CD8-positive, alpha-beta T cell (primary cell): ENCODE measurements at regions of chr15 and their contacts with region 1.

Region 1: GRCh38 chr15:64809649-64810496 is 15.6 kb downstream of the PIF1 start:
- DNase-seq: peak; percentile 27 to 78 (median 67)
- ATAC-seq: peak; percentile 71
- H3K4me3 ChIP-seq: no peak overlapping the region
- H3K4me3 Mint-ChIP-seq: no peak overlapping the region
- H3K27ac ChIP-seq: no peak overlapping the region
- H3K27ac Mint-ChIP-seq: no peak overlapping the region
- H3K4me1 ChIP-seq: no peaks in the 10 kb centered on the region
- H3K4me1 Mint-ChIP-seq: peaks cover 2% of the 10 kb centered on the region
- H3K27me3 ChIP-seq: no peaks in the 10 kb centered on the region
- H3K27me3 Mint-ChIP-seq: peaks cover 2% of the 10 kb centered on the region
- CTCF ChIP-seq: peak; percentile 88

Region 2: GRCh38 chr15:64681424-64682024 is 128.3 kb before region 1 on chr15:
- CTCF ChIA-PET with region 1: interaction called, 9 read pairs
- POLR2A ChIA-PET with region 1: no interaction called
- intact Hi-C with region 1: loop called in 1 of 2 experiments (anchors 1 kb)
- DNase-seq: peak in 2 of 9 experiments; percentile 26 to 38
- ATAC-seq: no peak
- H3K4me3 ChIP-seq: no peak overlapping the region
- H3K4me3 Mint-ChIP-seq: no peak overlapping the region
- H3K27ac ChIP-seq: no peak overlapping the region
- H3K27ac Mint-ChIP-seq: peak overlapping the region; percentile 62
- H3K4me1 ChIP-seq: no peaks in the 10 kb centered on the region
- H3K4me1 Mint-ChIP-seq: peaks cover 3% of the 10 kb centered on the region
- H3K27me3 ChIP-seq: no peaks in the 10 kb centered on the region
- H3K27me3 Mint-ChIP-seq: no peaks in the 10 kb centered on the region
- CTCF ChIP-seq: no peak

Region 3: GRCh38 chr15:64780600-64781156 is 29.2 kb before region 1 on chr15:
- CTCF ChIA-PET with region 1: interaction called, 36 read pairs
- POLR2A ChIA-PET with region 1: no interaction called
- intact Hi-C with region 1: no loop called
- DNase-seq: no peak
- ATAC-seq: no peak
- H3K4me3 ChIP-seq: no peak overlapping the region
- H3K4me3 Mint-ChIP-seq: no peak overlapping the region
- H3K27ac ChIP-seq: no peak overlapping the region
- H3K27ac Mint-ChIP-seq: no peak overlapping the region
- H3K4me1 ChIP-seq: peaks cover 4% of the 10 kb centered on the region
- H3K4me1 Mint-ChIP-seq: peaks cover 14% of the 10 kb centered on the region
- H3K27me3 ChIP-seq: peaks cover 4 to 5% of the 10 kb centered on the region in 2 experiments
- H3K27me3 Mint-ChIP-seq: peaks cover 13% of the 10 kb centered on the region
- CTCF ChIP-seq: no peak

Region 4: DNA sequence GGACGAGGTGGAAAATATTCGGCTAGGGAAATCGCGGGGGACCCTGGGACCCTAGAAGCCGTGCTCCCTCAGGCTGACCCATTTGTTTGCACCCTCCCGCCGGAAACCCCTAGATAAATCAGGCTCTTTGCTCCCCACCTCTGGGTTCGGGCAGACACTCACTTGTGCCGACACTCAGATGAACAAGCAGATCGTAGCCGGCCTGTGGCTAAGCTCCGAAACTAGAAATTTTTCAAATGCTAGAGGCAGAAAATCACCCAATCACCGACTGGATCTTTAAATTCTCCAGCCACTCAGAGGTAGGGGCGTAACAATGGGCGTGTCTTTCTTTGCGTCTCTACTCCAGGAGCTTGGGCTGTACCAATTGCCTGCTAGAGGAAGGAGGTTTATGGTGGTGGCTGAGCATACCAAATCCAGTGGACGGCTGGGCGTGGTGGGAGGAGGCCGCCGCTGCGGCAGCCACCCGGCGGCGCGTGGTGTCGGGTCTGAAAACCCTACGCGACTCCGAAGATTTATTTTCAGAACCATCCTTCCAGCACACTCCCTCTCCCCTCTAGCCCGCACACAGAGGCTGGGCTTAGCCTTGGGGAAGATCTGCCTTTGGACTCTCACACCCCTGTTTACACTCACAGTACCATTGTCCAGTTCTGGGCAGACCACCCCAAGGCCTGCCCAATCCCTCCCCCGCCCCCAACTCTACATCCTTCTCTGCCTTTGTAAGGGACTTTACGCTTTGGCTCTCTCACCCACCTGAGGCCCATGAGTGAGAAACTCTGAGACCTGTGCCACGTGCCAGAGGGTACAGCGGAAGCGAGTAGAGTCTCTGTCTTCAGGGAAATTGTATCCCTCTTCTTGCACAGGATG is 15.8 kb after region 1 on chr15 and contains the start of gene PIF1:
- CTCF ChIA-PET with region 1: interaction called, 59 read pairs
- POLR2A ChIA-PET with region 1: no interaction called
- intact Hi-C with region 1: no loop called
- DNase-seq: peak; percentile 67 to 97 (median 84)
- ATAC-seq: peak; percentile 97
- H3K4me3 ChIP-seq: peak within 1 kb of the TSS; percentile 41 to 47
- H3K4me3 Mint-ChIP-seq: peak within 1 kb of the TSS; percentile 88
- H3K27ac ChIP-seq: peak within 1 kb of the TSS in 1 of 2 experiments; percentile 64
- H3K27ac Mint-ChIP-seq: peak within 1 kb of the TSS; percentile 70
- H3K4me1 ChIP-seq: peaks cover 23% of the 10 kb centered on the region
- H3K4me1 Mint-ChIP-seq: peaks cover 32% of the 10 kb centered on the region
- H3K27me3 ChIP-seq: no peaks in the 10 kb centered on the region
- H3K27me3 Mint-ChIP-seq: peaks cover 14% of the 10 kb centered on the region
- CTCF ChIP-seq: no peak
- total RNA-seq, gene PIF1: 0.50 to 0.76 TPM

Region 5: DNA sequence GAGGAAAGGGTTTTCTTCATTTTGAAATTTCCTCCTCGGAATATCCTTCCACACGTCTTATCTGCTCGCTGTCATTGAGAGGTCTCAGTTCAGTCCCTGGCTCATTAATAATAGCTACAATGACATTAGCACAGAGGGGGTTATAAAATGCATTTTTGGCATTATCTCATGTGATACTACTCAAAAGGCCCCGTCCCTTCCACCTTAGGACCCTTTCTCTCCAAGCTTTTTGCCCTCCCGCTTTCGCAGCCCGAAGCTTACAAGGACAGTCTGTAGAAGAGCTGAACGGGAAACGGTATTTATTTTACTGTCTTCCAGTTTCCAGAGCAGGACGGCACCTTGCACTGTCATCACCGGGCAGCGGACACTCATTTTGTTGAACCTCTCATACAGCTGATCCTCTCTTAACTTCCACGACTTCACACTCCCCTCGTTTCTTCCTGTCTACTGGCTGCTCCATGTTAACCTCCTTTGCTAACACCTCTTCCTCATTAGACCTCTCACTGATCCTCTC is 26.2 kb after region 1 on chr15:
- CTCF ChIA-PET with region 1: interaction called, 18 read pairs
- POLR2A ChIA-PET with region 1: interaction called, 3 read pairs
- intact Hi-C with region 1: no loop called
- DNase-seq: no peak
- ATAC-seq: no peak
- H3K4me3 ChIP-seq: no peak overlapping the region
- H3K4me3 Mint-ChIP-seq: no peak overlapping the region
- H3K27ac ChIP-seq: no peak overlapping the region
- H3K27ac Mint-ChIP-seq: peak overlapping the region; percentile 43
- H3K4me1 ChIP-seq: peaks cover 53% of the 10 kb centered on the region
- H3K4me1 Mint-ChIP-seq: peaks cover 49% of the 10 kb centered on the region
- H3K27me3 ChIP-seq: no peaks in the 10 kb centered on the region
- H3K27me3 Mint-ChIP-seq: no peaks in the 10 kb centered on the region
- CTCF ChIP-seq: no peak

Region 6: DNA sequence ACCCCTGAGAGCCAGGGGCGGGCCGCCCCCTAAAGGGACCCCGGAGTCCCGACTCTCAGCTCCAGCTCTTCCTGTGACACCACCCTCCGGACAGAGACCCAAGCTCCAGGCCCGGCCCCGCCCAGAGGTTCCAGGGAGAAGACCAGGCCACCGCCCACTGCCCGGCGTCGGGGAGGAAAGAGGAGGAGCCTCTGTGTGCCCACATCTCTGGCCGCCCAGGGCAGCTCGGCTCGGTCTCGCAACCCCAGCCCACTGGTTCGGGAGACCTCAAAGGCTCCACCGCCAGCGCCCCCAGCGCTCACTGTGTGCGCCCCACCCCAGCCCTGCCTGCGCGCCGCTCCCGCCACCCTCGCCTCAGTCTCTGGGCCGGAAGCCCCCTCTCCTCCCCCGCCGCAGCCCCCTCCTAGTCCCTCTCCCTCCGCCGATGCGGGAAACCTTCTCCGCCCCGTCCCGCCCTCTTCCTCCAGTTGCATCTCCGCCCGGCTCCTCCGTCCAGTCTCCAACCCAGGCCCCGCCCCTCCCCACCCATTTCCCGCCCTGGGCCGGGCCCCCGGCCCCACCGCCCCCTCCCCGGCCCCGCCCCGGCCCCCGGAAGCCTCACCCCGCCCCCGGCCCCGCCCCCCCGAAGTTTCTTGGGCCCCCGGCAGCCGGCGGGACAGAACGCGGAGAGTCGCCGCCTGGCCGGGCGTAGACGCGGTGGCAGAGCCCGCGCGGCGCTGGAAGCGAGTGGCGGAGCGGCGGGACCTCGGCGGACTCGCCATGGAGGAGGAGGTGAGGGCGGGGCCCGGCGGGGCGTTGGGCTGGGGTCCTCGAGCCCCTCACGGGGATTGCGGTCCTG is 31.6 kb after region 1 on chr15 and contains the start of gene PLEKHO2:
- CTCF ChIA-PET with region 1: interaction called, 18 read pairs
- POLR2A ChIA-PET with region 1: no interaction called
- intact Hi-C with region 1: no loop called
- DNase-seq: peak; percentile 66 to 96 (median 91)
- ATAC-seq: peak; percentile 76
- H3K4me3 ChIP-seq: peak within 1 kb of the TSS; percentile 65 to 71
- H3K4me3 Mint-ChIP-seq: peak within 1 kb of the TSS; percentile 95
- H3K27ac ChIP-seq: peak within 1 kb of the TSS; percentile 57 to 79
- H3K27ac Mint-ChIP-seq: peak within 1 kb of the TSS; percentile 93
- H3K4me1 ChIP-seq: peaks cover 81% of the 10 kb centered on the region
- H3K4me1 Mint-ChIP-seq: peaks cover 82% of the 10 kb centered on the region
- H3K27me3 ChIP-seq: no peaks in the 10 kb centered on the region
- H3K27me3 Mint-ChIP-seq: no peaks in the 10 kb centered on the region
- CTCF ChIP-seq: peak; percentile 40
- total RNA-seq, gene PLEKHO2: 7.9 to 8.2 TPM

Region 7: GRCh38 chr15:64905119-64905831 is 95.4 kb after region 1 on chr15:
- CTCF ChIA-PET with region 1: interaction called, 15 read pairs
- POLR2A ChIA-PET with region 1: no interaction called
- intact Hi-C with region 1: no loop called
- DNase-seq: peak; percentile 60 to 86 (median 79)
- ATAC-seq: peak; percentile 81
- H3K4me3 ChIP-seq: peak overlapping the region; percentile 11 to 21
- H3K4me3 Mint-ChIP-seq: peak overlapping the region; percentile 69
- H3K27ac ChIP-seq: no peak overlapping the region
- H3K27ac Mint-ChIP-seq: no peak overlapping the region
- H3K4me1 ChIP-seq: peaks cover 25% of the 10 kb centered on the region
- H3K4me1 Mint-ChIP-seq: peaks cover 37% of the 10 kb centered on the region
- H3K27me3 ChIP-seq: no peaks in the 10 kb centered on the region
- H3K27me3 Mint-ChIP-seq: peaks cover 4% of the 10 kb centered on the region
- CTCF ChIP-seq: peak; percentile 87